Activated CD8-positive, alpha-beta memory T cell treated with anti-CD3 and anti-CD28 coated beads, Interleukin-2, amount 10 ng/mL, durations not matched to agents 7 days and 5 days (primary cell): ENCODE measurements at regions of chr15 and their contacts with region 1.

Region 1: DNA sequence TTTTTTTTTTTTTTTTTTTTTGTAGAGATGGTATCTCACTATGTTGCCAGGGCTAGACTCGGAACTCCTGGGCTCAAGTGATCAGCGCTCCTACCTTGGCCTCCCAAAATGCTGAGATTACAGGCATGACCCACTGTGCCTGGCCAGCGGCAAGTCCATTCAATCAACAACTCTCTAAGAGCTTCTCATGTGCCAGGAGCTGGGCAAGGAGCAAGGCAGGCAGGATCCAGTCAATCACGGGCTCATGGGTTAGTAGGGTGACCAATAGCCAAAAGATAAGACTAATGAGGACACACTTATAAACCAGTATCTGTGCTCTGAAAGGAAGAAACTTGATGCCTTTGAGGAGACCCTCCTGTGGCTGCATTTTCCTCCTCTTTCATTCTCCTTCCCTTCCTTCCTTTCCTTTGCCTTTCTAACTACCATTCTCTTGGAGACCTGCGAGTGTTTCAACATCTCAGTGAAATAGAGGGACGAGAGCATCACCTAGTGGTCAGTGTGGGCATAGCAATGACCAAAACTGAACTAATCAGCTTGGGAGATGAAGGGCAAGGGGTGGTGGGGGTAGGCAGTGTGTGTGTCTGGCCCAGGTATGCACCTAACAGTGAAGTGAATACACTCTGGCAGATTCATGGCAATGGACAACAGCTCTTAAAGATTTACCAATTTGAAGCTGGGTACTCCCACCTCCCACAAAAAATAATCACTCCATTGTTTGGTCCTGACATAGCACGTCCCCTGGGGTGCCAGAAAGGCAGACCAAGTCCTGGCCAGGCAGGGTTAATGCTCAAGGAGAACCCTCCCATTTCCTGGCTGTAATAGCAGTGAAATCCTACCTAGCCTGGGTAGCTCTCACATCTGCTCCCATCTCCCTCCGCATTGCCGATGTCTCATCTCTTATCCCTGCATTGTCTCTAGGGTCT is 6.2 kb downstream of the RPP25 start:
- DNase-seq: peak; percentile 86
- ATAC-seq: peak; percentile 80
- H3K4me3 Mint-ChIP-seq: no peak overlapping the region
- H3K27ac Mint-ChIP-seq: no peak overlapping the region
- H3K4me1 Mint-ChIP-seq: peaks cover 9% of the 10 kb centered on the region
- H3K27me3 Mint-ChIP-seq: no peaks in the 10 kb centered on the region

Region 2: GRCh38 chr15:74781431-74782258 is 168.7 kb before region 1 on chr15 and contains the start of gene CSK:
- CTCF ChIA-PET with region 1: interaction called, 15 read pairs
- DNase-seq: peak; percentile 84
- ATAC-seq: peak; percentile 62
- H3K4me3 Mint-ChIP-seq: peak within 1 kb of the TSS; percentile 87
- H3K27ac Mint-ChIP-seq: peak within 1 kb of the TSS; percentile 98
- H3K4me1 Mint-ChIP-seq: peaks cover 64% of the 10 kb centered on the region
- H3K27me3 Mint-ChIP-seq: no peaks in the 10 kb centered on the region
- total RNA-seq, gene CSK: 349 to 369 TPM

Region 3: DNA sequence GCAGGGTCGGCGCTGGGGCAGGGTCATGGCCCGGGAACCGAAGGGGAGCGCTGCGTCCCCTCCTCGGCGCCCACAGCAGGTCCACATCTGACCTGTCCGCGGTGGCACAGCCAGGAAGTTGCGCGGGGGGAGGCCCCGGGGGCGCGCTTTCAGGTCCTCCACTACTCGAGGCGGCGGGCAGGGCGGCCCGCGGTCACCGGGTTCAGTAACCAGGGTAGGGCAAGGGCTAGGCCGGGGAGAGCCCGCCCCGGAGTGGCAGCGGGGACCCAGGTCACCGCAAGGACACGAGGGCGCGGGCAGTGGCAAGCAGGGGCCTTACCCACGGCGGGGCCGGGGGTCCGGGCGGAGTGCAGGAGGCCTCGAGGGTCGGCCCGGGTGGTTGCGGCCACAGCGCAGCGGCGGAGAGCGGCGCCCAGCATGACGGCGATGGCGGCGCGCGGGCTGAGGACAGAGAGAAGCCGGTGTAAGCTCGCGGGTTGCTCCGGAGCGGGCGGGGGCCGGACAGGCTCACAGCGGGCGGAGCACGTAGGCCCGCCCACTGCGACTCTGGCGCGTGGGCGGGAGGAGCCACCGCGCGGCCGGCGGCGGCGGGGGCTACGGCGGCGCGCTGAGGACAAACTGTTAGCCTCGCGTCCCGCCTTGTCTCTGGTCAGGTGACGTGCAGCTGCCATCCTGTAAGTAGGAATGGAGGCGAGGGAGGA is 12.6 kb before region 1 on chr15 and contains the start of gene COX5A:
- CTCF ChIA-PET with region 1: interaction called, 16 read pairs
- DNase-seq: peak; percentile 95
- ATAC-seq: peak; percentile 96
- H3K4me3 Mint-ChIP-seq: peak within 1 kb of the TSS; percentile 92
- H3K27ac Mint-ChIP-seq: peak within 1 kb of the TSS; percentile 93
- H3K4me1 Mint-ChIP-seq: peaks cover 34% of the 10 kb centered on the region
- H3K27me3 Mint-ChIP-seq: no peaks in the 10 kb centered on the region
- total RNA-seq, gene COX5A: 322 to 326 TPM